CD4-positive, alpha-beta memory T cell (primary cell): ENCODE measurements at regions of chr10 and their contacts with region 1.

Region 1: GRCh38 chr10:124741281-124741921 is 2.8 kb downstream of the FAM53B start:
- DNase-seq: peak; percentile 77 to 82 (median 79)
- H3K4me3 ChIP-seq: peak overlapping the region; percentile 57 to 79
- H3K4me3 Mint-ChIP-seq: peak overlapping the region; percentile 95 to 100 (median 98)
- H3K27ac ChIP-seq: peak overlapping the region; percentile 64
- H3K27ac Mint-ChIP-seq: peak overlapping the region; percentile 87 to 97 (median 96)
- H3K4me1 ChIP-seq: peaks cover 72% of the 10 kb centered on the region
- H3K4me1 Mint-ChIP-seq: peaks cover 60 to 77% (median 69%) of the 10 kb centered on the region in 4 donors
- H3K27me3 ChIP-seq: no peaks in the 10 kb centered on the region
- H3K27me3 Mint-ChIP-seq: no peaks in the 10 kb centered on the region

Region 2: DNA sequence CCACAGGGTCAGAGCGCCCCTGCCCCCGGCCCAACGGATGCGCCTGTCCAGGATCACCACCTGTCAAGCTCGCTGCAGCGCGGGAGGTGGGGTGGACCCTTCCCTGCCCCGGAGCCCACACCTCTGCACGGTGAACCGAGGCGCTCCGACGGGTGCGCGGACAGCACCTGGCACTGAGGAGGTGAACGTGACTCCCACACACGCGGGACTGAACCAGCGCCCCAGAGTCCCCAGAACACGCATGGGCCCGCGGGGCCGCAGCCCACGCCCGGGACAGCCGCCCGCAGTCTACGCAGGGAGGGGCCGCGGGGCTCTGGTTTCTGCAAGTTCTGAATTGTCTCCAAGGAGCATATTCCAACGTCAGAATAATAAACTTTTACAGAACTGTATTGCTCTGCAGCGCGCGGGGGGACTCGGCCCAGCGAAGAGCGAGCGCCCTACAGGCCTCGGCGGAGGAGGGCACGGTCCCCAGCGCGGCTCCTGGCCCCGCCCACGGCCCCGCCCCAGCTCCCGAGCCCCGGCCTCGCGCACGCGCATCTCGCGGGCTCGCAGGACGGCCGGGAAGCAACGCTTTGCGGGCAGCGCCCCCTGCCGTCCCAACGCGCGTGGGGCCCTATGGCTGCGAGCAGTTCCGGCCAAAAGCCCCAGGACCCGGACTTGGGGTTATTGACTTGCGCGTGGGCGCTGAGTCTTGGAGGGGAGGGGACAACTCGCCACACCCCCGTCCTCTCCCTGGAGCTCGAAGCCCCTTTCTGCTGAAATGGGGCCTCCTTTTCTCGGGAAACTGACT is 352.4 kb before region 1 on chr10:
- CTCF ChIA-PET with region 1: interaction called, 3 read pairs
- POLR2A ChIA-PET with region 1: no interaction called
- intact Hi-C with region 1: loop called (anchors 1 kb)
- DNase-seq: peak; percentile 86 to 92 (median 90)
- H3K4me3 ChIP-seq: peak overlapping the region in 1 of 2 donors; percentile 71
- H3K4me3 Mint-ChIP-seq: peak overlapping the region in 6 of 8 donors; percentile 27 to 73 (median 66)
- H3K27ac ChIP-seq: peak overlapping the region; percentile 29
- H3K27ac Mint-ChIP-seq: peak overlapping the region in 1 of 7 donors; percentile 30
- H3K4me1 ChIP-seq: peaks cover 11% of the 10 kb centered on the region
- H3K4me1 Mint-ChIP-seq: peaks cover 0 to 5% (median 2%) of the 10 kb centered on the region in 4 donors
- H3K27me3 ChIP-seq: no peaks in the 10 kb centered on the region
- H3K27me3 Mint-ChIP-seq: peaks cover 0 to 7% of the 10 kb centered on the region in 2 donors

Region 3: GRCh38 chr10:124539935-124540641 is 201.3 kb before region 1 on chr10:
- CTCF ChIA-PET with region 1: interaction called, 256 read pairs
- POLR2A ChIA-PET with region 1: interaction called, 27 read pairs
- intact Hi-C with region 1: loop called (anchors 1 kb)
- DNase-seq: peak; percentile 59 to 69 (median 63)
- H3K4me3 ChIP-seq: no peak overlapping the region
- H3K4me3 Mint-ChIP-seq: peak overlapping the region in 1 of 8 donors; percentile 36
- H3K27ac ChIP-seq: no peak overlapping the region
- H3K27ac Mint-ChIP-seq: peak overlapping the region in 1 of 7 donors; percentile 65
- H3K4me1 ChIP-seq: peaks cover 8% of the 10 kb centered on the region
- H3K4me1 Mint-ChIP-seq: peaks cover 0 to 10% (median 2%) of the 10 kb centered on the region in 4 donors
- H3K27me3 ChIP-seq: no peaks in the 10 kb centered on the region
- H3K27me3 Mint-ChIP-seq: no peaks in the 10 kb centered on the region

Region 4: GRCh38 chr10:124626759-124627380 is 114.5 kb before region 1 on chr10:
- CTCF ChIA-PET with region 1: interaction called, 89 read pairs
- POLR2A ChIA-PET with region 1: interaction called, 43 read pairs
- intact Hi-C with region 1: loop called (anchors 1 kb)
- DNase-seq: peak; percentile 46 to 60 (median 55)
- H3K4me3 ChIP-seq: peak overlapping the region; percentile 11 to 14
- H3K4me3 Mint-ChIP-seq: peak overlapping the region in 7 of 8 donors; percentile 36 to 76 (median 69)
- H3K27ac ChIP-seq: peak overlapping the region; percentile 49
- H3K27ac Mint-ChIP-seq: peak overlapping the region; percentile 82 to 96 (median 89)
- H3K4me1 ChIP-seq: peaks cover 68% of the 10 kb centered on the region
- H3K4me1 Mint-ChIP-seq: peaks cover 34 to 81% (median 50%) of the 10 kb centered on the region in 4 donors
- H3K27me3 ChIP-seq: no peaks in the 10 kb centered on the region
- H3K27me3 Mint-ChIP-seq: no peaks in the 10 kb centered on the region

Region 5: GRCh38 chr10:124671486-124672075 is 69.8 kb before region 1 on chr10:
- CTCF ChIA-PET with region 1: interaction called, 20 read pairs
- POLR2A ChIA-PET with region 1: interaction called, 66 read pairs
- intact Hi-C with region 1: no loop called
- DNase-seq: peak in 1 of 5 donors; percentile 33
- H3K4me3 ChIP-seq: no peak overlapping the region
- H3K4me3 Mint-ChIP-seq: peak overlapping the region in 7 of 8 donors; percentile 53 to 84 (median 67)
- H3K27ac ChIP-seq: peak overlapping the region; percentile 43
- H3K27ac Mint-ChIP-seq: peak overlapping the region; percentile 83 to 96 (median 90)
- H3K4me1 ChIP-seq: peaks cover 100% of the 10 kb centered on the region
- H3K4me1 Mint-ChIP-seq: peaks cover 68 to 99% (median 88%) of the 10 kb centered on the region in 4 donors
- H3K27me3 ChIP-seq: no peaks in the 10 kb centered on the region
- H3K27me3 Mint-ChIP-seq: no peaks in the 10 kb centered on the region

Region 6: GRCh38 chr10:124703778-124704427 is 37.5 kb before region 1 on chr10:
- CTCF ChIA-PET with region 1: interaction called, 129 read pairs
- POLR2A ChIA-PET with region 1: interaction called, 65 read pairs
- intact Hi-C with region 1: loop called (anchors 1 kb)
- DNase-seq: peak in 1 of 5 donors; percentile 15
- H3K4me3 ChIP-seq: no peak overlapping the region
- H3K4me3 Mint-ChIP-seq: peak overlapping the region in 7 of 8 donors; percentile 23 to 90 (median 58)
- H3K27ac ChIP-seq: peak overlapping the region; percentile 90
- H3K27ac Mint-ChIP-seq: peak overlapping the region; percentile 95 to 99 (median 97)
- H3K4me1 ChIP-seq: peaks cover 100% of the 10 kb centered on the region
- H3K4me1 Mint-ChIP-seq: peaks cover 72 to 100% (median 93%) of the 10 kb centered on the region in 4 donors
- H3K27me3 ChIP-seq: no peaks in the 10 kb centered on the region
- H3K27me3 Mint-ChIP-seq: no peaks in the 10 kb centered on the region

Region 7: GRCh38 chr10:124791378-124792348 is 50.3 kb after region 1 on chr10 and contains the start of gene EEF1AKMT2:
- CTCF ChIA-PET with region 1: no interaction called
- POLR2A ChIA-PET with region 1: interaction called, 14 read pairs
- intact Hi-C with region 1: loop called (anchors 1 kb)
- DNase-seq: peak; percentile 78 to 87 (median 85)
- H3K4me3 ChIP-seq: peak within 1 kb of the TSS; percentile 97 to 99
- H3K4me3 Mint-ChIP-seq: peak within 1 kb of the TSS; percentile 92 to 99 (median 98)
- H3K27ac ChIP-seq: peak within 1 kb of the TSS; percentile 76
- H3K27ac Mint-ChIP-seq: peak within 1 kb of the TSS; percentile 78 to 97 (median 93)
- H3K4me1 ChIP-seq: peaks cover 16% of the 10 kb centered on the region
- H3K4me1 Mint-ChIP-seq: peaks cover 5 to 28% (median 17%) of the 10 kb centered on the region in 4 donors
- H3K27me3 ChIP-seq: no peaks in the 10 kb centered on the region
- H3K27me3 Mint-ChIP-seq: no peaks in the 10 kb centered on the region
- total RNA-seq, gene EEF1AKMT2: 20.0 to 24.2 TPM

Region 8: DNA sequence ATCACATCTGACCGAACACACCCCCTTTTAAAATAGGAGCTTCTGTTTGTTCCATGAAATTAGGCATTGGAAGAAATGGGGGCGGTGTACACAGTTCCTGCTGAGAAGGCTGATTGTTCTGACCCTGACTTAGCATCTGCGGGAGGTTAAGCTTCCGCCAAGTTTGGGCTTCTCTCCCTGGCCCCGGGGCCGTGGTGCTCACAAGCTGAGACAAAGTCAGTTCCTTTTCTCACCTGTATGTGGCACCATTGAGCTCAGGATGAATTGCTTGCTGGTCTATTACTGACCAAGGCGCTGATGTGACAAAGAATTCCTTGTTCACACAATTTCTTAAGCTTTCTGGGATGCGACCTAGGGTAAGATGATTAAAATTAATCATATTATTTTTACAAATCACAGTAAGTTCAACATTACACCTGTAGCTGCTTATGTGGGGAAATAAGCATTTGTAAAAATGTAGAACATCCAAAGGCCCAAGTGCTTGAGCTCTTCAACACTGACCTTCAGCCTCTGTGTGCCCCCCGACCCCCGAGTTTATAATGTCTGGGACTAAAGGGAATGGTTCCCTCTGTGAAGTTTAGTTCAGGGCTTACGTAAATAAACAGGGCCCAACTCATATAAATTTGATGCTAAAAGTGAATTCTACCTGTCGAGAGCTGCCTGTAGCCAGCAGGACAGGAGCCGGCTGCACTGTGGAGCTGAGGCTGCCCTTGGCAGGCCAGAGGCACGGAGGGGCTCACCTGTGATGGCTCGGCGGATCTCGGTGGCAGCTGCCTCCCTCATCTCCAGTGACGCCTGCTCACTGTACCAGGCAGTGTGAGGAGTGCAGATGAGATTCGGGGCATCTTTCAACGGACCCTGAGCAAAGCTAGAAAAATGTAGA is 251.3 kb after region 1 on chr10:
- CTCF ChIA-PET with region 1: no interaction called
- POLR2A ChIA-PET with region 1: no interaction called
- intact Hi-C with region 1: no loop called
- DNase-seq: peak in 1 of 5 donors; percentile 14
- H3K4me3 ChIP-seq: no peak overlapping the region
- H3K4me3 Mint-ChIP-seq: no peak overlapping the region
- H3K27ac ChIP-seq: no peak overlapping the region
- H3K27ac Mint-ChIP-seq: no peak overlapping the region
- H3K4me1 ChIP-seq: no peaks in the 10 kb centered on the region
- H3K4me1 Mint-ChIP-seq: peaks cover 0 to 4% (median under 1%) of the 10 kb centered on the region in 4 donors
- H3K27me3 ChIP-seq: no peaks in the 10 kb centered on the region
- H3K27me3 Mint-ChIP-seq: no peaks in the 10 kb centered on the region

Region 9: DNA sequence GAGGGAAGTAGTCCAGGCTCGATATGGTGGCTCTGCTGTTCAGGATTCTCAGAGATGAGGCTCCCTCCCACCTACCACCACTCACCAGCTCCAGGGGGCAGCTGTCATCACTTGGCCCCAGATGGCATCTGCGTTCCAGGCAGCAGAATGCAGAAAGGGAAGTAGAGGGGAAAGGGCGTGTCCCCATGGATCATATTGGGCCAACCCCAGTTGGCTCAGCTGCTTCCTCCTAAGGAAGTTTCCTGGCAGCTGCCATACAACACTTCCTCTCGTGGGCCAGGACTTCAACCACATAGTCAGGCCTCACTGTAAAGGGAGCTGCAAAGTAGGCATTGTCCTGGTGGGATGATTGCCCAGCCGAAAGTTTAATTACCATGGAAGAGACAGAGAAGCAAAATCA is 943.2 kb after region 1 on chr10:
- CTCF ChIA-PET with region 1: no interaction called
- POLR2A ChIA-PET with region 1: no interaction called
- intact Hi-C with region 1: no loop called
- DNase-seq: no peak
- H3K4me3 ChIP-seq: no peak overlapping the region
- H3K4me3 Mint-ChIP-seq: no peak overlapping the region
- H3K27ac ChIP-seq: no peak overlapping the region
- H3K27ac Mint-ChIP-seq: no peak overlapping the region
- H3K4me1 ChIP-seq: no peaks in the 10 kb centered on the region
- H3K4me1 Mint-ChIP-seq: no peaks in the 10 kb centered on the region
- H3K27me3 ChIP-seq: no peaks in the 10 kb centered on the region
- H3K27me3 Mint-ChIP-seq: peaks cover 14 to 24% of the 10 kb centered on the region in 2 donors